Activated CD4-positive, alpha-beta T cell treated with anti-CD3 and anti-CD28 coated beads for 36 hours (primary cell): ENCODE measurements at regions of chr12 and their contacts with region 1.

Region 1: GRCh38 chr12:66942741-66943465 is 264.0 kb upstream of the GRIP1 start:
- DNase-seq: no peak
- ATAC-seq: no peak
- H3K4me3 Mint-ChIP-seq: no peak overlapping the region
- H3K27ac Mint-ChIP-seq: no peak overlapping the region
- H3K4me1 Mint-ChIP-seq: peaks cover 35% of the 10 kb centered on the region
- H3K27me3 Mint-ChIP-seq: peaks cover 2% of the 10 kb centered on the region

Region 2: DNA sequence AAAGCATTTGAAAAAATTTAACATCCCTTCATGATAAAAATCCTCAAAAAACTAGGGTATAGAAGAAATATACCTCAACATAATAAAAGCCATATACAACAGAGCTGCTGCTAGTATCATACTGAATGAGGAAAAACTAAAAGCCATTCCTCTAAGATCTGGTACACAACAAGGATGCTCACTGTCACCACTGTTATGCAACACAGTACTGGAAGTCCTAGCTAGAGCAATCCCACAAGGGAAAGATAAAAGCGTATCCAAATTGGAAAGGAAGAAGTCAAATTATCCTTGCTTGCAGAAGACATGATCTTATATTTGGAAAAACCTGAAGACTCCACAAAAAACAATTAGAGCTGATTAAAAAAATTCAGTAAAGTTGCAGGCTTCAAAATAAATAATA is 525.7 kb before region 1 on chr12:
- CTCF ChIA-PET with region 1: no interaction called
- POLR2A ChIA-PET with region 1: no interaction called
- intact Hi-C with region 1: no loop called
- DNase-seq: no peak
- ATAC-seq: no peak
- H3K4me3 Mint-ChIP-seq: no peak overlapping the region
- H3K27ac Mint-ChIP-seq: no peak overlapping the region
- H3K4me1 Mint-ChIP-seq: no peaks in the 10 kb centered on the region
- H3K27me3 Mint-ChIP-seq: peaks cover 3% of the 10 kb centered on the region

Region 3: GRCh38 chr12:66978802-66979201 is 35.9 kb after region 1 on chr12:
- CTCF ChIA-PET with region 1: no interaction called
- POLR2A ChIA-PET with region 1: no interaction called
- intact Hi-C with region 1: loop called in 1 of 2 experiments (anchors 2 kb)
- DNase-seq: no peak
- ATAC-seq: peak; percentile 35
- H3K4me3 Mint-ChIP-seq: no peak overlapping the region
- H3K27ac Mint-ChIP-seq: no peak overlapping the region
- H3K4me1 Mint-ChIP-seq: peaks cover 10% of the 10 kb centered on the region
- H3K27me3 Mint-ChIP-seq: no peaks in the 10 kb centered on the region

Region 4: DNA sequence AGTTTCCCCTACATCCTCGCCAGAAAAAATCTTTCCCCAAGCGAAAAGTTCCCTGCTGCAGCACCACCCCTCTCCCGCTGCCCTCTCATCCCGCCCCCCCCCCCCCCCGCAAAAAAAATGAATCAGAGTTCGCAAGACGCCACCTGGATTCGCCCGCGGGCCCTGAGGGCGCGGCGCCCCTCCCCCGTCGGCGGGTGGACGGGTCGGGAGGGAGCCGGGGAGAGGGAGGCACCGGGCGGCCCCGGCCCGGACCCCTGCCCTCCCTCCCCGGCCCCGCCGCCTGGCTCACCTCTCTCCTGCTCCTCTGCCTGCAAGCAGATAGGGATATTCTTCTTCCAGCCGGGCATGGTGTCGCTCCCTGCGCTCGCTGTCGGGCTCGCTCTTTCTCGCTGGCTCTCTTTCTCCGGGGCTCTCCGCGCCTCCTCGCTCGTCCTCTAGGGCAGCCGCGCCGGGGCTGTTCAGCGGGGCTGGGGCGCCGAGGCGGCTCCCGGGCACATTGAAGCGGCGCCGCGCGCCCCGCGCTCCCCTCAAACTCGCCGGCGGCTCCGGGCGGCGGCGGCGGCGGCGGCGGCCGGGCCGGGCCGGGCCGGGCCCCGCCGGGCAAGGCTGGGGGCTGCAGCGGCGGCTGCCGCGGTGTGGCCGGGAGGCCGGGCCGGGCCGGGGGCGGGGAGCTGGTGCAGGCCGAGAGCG is 126.0 kb after region 1 on chr12:
- CTCF ChIA-PET with region 1: interaction called, 3 read pairs
- POLR2A ChIA-PET with region 1: no interaction called
- intact Hi-C with region 1: loop called in 1 of 2 experiments (anchors 10 kb)
- DNase-seq: peak; percentile 67
- ATAC-seq: peak; percentile 63
- H3K4me3 Mint-ChIP-seq: peak overlapping the region; percentile 80
- H3K27ac Mint-ChIP-seq: no peak overlapping the region
- H3K4me1 Mint-ChIP-seq: peaks cover 18% of the 10 kb centered on the region
- H3K27me3 Mint-ChIP-seq: peaks cover 33% of the 10 kb centered on the region

Region 5: DNA sequence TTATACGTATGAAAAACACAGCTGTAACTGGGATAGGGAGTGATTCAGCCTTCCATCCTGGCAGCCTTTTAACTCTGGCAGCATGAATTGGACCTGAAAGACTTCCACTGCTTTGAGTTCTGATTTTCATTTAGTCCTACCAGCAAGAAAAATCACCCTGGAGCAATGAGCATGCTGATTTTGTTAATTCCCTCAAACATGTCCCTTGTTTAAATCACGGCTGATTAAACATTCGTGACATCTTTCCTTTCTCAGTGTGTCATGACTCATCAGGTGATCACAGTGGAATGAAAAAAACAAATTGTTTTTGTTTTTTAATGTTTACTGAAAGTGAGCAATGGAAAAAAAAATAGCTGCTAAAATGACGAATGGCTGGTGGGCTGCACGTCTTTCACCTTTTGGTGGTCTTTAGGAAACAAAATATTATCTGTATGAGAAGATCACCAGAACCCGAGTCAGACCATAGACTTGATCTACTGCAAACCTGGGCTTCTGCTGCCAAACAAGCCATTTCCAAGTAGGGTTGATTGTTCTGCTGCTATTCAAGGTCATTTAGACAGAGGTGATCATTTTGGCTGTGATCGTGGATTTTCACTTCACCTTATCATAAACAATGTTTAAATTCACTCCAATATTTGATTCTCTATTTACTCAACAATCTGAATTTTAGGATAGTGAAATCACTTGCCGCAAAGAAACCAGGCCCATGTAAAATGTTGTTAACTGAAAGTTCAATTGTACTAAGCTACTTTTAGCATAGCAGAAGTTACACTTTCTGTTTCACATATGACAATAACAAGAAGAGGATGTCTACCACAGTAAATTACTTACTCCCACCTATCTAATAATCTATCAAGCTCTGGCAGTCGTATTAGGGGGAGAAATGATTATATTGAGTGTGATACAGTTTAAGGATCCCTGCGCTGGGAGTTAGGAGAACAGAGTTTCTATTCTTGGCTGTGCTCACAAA is 259.4 kb after region 1 on chr12:
- CTCF ChIA-PET with region 1: no interaction called
- POLR2A ChIA-PET with region 1: no interaction called
- intact Hi-C with region 1: no loop called
- DNase-seq: no peak
- ATAC-seq: no peak
- H3K4me3 Mint-ChIP-seq: no peak overlapping the region
- H3K27ac Mint-ChIP-seq: no peak overlapping the region
- H3K4me1 Mint-ChIP-seq: peaks cover 4% of the 10 kb centered on the region
- H3K27me3 Mint-ChIP-seq: peaks cover 12% of the 10 kb centered on the region